A549 (cell line): ENCODE measurements at regions of chr16 and their contacts with region 1.

Region 1: DNA sequence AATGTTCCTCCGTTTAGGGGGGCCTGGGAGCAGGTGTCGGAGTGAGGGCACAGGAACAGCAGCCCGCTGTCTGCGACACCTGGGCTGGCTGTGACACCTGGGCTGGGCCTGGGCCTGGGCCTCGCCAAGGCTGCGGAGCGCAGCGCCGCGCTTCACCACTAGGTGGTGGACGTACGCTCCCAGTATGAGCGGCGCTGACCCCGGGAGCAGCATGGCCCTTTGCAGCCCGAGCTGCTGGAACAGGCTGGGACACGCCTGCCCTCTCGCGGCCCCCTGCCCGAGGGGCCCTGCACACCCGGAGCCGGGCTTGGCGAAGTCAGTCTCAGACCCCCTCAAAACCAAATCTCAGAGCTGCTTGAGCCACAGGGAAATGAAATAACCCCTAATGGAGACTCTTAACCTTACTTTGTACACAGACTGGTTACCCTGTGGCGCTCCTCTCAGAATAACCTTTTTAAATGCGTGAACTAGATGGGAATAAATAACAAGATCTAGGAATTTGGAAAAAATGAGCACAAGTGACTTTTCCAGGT is 38.6 kb upstream of the FA2H start:
- DNase-seq: peak; percentile 87 to 91
- ATAC-seq: peak; percentile 99 to 100
- H3K4me3 ChIP-seq: no peak overlapping the region
- H3K27ac ChIP-seq: peak overlapping the region; percentile 39 to 74; a peak in 5 of 6 replicates
- H3K4me1 ChIP-seq: no peaks in the 10 kb centered on the region
- CTCF ChIP-seq: peak; percentile 96
- EP300 ChIP-seq: no peak
- POLR2A ChIP-seq: no peak
- RAD21 ChIP-seq: peak; percentile 88 to 96

Region 2: DNA sequence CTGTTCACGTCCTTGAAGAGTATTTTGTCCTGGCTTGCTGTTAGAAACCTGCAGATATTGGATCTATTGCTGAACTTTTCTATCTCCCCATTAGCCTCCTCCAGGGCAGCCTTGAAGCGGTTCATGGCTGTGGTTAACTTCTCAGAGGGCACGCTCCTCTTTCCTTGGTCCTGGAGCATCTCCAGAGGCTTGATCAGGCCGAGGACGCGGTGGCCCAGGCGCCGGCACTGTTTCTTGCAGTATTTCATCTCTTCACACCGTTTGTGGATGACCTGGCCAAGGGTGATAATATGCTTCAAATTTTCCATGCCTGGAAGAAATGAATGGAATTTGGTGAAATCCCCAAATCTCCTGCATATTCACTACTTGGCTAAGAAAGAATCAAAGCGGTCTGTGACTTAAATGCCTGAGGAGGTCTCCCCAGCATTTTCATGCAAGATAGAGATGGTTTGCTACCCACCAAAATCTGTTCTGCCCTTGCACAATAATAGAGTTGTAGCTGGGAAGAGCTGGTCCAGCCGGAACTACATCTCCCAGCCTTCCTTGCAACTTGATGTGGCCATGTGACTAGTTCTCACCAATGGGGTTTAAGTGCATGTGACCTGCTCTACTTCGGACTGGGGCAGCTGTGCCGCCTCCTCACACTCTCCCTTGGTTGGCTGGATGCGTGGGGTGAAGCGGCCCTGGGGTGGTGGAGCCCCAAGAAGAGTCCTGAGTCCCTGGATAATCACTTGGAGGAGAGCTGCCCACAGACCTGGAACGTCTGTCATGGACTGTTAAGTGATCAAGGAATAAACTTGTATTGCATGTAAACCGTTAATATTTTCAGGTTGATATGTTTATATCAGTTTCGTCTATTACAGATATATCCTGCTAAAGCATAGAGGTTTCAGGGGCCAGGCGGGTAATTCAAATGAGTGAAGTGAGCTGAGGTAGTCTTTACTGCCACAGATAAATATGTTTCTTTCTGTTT is 117.4 kb before region 1 on chr16:
- CTCF ChIA-PET with region 1: interaction called, 17 read pairs
- POLR2A ChIA-PET with region 1: no interaction called
- DNase-seq: peak; percentile 93 to 98
- ATAC-seq: peak; percentile 94 to 96
- H3K4me3 ChIP-seq: peak overlapping the region; percentile 35
- H3K27ac ChIP-seq: peak overlapping the region; percentile 58 to 77; a peak in 5 of 6 replicates
- H3K4me1 ChIP-seq: peaks cover 23% of the 10 kb centered on the region; the same call in 2 of the 3 replicates
- CTCF ChIP-seq: no peak
- EP300 ChIP-seq: no peak
- POLR2A ChIP-seq: peak; percentile 61
- RAD21 ChIP-seq: no peak

Region 3: DNA sequence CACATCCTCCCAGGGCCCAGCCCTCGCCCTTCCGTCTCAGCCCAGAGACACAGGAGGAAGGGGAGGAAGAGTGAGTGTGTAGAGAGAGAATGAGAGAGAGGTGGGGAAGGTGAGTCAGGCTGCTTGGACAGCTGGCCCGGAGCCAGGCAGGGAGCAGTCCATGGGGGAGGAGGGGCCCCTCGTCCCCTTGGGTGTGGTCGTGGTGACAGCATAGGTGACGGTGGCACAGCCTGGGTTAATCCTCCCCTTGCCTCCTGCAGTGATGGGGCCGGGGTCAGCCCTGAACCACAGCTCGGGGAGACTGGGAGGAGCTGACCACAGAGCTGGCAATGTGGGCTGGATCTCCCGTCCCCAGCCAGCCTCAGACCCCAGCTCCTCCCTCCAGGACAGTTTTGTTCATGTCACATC is 75.0 kb before region 1 on chr16:
- CTCF ChIA-PET with region 1: interaction called, 14 read pairs
- POLR2A ChIA-PET with region 1: no interaction called
- DNase-seq: peak; percentile 83 to 91
- ATAC-seq: peak; percentile 50 to 64
- H3K4me3 ChIP-seq: no peak overlapping the region
- H3K27ac ChIP-seq: peak overlapping the region; percentile 91
- H3K4me1 ChIP-seq: peaks cover 85% of the 10 kb centered on the region
- CTCF ChIP-seq: no peak
- EP300 ChIP-seq: peak; percentile 15 to 70; a peak in 2 of 5 replicates
- POLR2A ChIP-seq: no peak
- RAD21 ChIP-seq: no peak

Region 4: GRCh38 chr16:74774203-74775116 is 38.7 kb before region 1 on chr16 and contains the start of gene FA2H:
- CTCF ChIA-PET with region 1: interaction called, 16 read pairs
- POLR2A ChIA-PET with region 1: no interaction called
- DNase-seq: peak; percentile 71 to 96
- ATAC-seq: peak; percentile 96 to 98
- H3K4me3 ChIP-seq: peak within 1 kb of the TSS; percentile 87
- H3K27ac ChIP-seq: peak within 1 kb of the TSS; percentile 80 to 85
- H3K4me1 ChIP-seq: peaks cover 10% of the 10 kb centered on the region; the same call in 2 of the 3 replicates
- CTCF ChIP-seq: peak; percentile 50
- EP300 ChIP-seq: no peak
- POLR2A ChIP-seq: peak; percentile 34; the same call in 1 of the 2 replicates
- RAD21 ChIP-seq: peak in 1 of 2 experiments; percentile 44; a peak in 3 of 5 replicates
- polyA plus RNA-seq, gene FA2H: 7.1 and 11.0 TPM in 2 replicates

Region 5: DNA sequence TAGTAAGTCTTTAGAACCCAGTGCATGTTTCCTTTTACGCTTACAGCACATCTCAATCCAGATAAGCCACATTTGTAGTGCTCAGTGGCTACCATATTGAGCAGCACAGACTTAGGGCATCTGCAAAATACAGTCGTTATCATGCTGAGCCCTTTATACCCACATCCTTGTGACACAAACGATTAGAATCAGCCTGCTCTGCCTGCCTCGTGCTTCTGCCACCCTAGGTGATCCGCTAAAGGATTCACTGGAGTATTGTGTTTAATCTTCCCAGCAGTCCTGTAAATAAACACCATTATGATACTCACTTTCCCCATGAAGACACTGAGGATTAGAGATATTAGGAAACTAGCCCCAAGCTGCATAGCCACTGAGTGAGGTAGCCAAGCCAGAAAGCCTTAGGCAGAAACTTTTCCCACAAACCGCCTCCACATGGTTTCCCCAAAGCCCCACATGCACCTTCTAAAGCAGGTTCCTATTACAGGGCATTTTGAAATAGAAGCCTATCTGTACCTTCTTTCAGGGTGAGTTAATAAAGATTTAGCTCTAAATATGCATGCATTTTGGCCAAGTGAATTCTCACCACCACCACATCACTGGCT is 12.9 kb after region 1 on chr16:
- CTCF ChIA-PET with region 1: interaction called, 19 read pairs
- POLR2A ChIA-PET with region 1: no interaction called
- DNase-seq: no peak
- ATAC-seq: no peak
- H3K4me3 ChIP-seq: no peak overlapping the region
- H3K27ac ChIP-seq: no peak overlapping the region
- H3K4me1 ChIP-seq: no peaks in the 10 kb centered on the region
- CTCF ChIP-seq: no peak
- EP300 ChIP-seq: no peak
- POLR2A ChIP-seq: no peak
- RAD21 ChIP-seq: no peak